ENCODE measurements at regions of chr1 and their contacts with region 1.

Region 1: DNA sequence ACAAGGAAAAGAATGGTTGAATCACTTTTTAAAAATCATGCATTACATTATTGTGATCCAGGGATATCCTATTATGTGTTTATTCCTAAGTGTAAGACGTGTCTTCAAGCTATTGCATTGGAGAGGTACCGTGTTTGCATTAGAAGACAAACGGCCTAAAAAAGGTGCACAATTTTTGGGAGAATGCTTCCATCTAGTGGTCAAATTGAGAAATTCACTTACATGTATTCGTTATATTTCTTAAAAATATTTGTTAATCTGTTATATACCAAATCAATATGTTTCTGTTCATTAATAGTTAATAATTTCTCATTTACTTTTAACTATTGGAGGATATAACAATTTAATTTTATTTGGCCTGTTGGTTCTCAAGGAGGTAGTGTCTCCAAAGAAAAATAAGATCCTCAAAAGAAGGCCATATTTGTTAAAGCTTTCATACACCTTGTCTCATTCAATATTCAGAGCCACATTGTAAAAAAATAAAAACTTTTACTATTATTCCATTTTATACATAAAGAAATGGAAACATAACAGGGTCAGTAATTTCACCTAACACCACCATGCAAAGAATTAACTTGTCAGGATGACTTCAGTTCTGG is 40.5 kb upstream of the KCTD3 start:
- DNase-seq: no peak
- ATAC-seq: no peak

Region 2: GRCh38 chr1:214658786-214659185 is 867.9 kb before region 1 on chr1:
- intact Hi-C with region 1: loop called (anchors 10 kb)
- DNase-seq: no peak
- ATAC-seq: no peak

Measured in Right ventricle myocardium superior (tissue), 1 donor.